Spleen (tissue), 13 donors: ENCODE measurements at regions of chr15 and their contacts with region 1.

Region 1: DNA sequence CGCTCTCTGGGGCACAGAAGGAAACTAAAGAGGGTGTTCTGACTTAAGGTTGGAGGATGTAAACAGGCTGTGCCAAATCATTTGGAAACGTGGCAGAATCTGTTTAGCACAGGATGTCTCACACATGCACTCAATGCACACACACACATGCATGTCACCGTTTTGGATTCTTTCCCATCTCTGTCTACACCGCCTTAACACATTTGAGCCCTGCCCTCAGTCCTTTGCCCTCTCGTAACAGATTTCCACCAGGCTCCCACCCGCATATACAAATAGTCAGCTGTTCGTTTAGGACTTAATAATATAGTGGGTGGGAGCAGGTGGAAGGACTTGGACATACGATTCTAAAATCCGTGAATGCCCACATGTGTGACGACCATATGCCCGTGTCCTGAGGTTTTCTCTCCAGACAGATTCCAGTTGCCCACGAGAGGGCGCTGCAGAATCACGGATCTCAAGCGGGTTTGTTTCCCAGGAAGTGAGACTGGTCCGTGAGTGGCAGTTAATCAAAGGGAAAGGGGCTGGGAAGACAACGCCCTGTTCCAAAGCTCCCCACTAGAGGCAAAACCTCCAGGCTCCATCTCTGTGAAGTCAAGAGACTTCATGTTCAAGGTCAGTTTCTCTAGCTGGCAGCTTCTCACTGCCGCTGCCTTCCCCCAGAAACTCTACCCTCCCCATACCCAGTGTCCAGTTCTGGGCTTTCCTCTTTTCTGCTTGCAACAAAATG is 44.5 kb downstream of the NOX5 start:
- DNase-seq: peak; percentile 90
- H3K4me3 ChIP-seq: no peak overlapping the region
- H3K27ac ChIP-seq: no peak overlapping the region
- H3K4me1 ChIP-seq: peaks cover 0 to 25% (median 7%) of the 10 kb centered on the region in 6 donors
- H3K27me3 ChIP-seq: peaks cover 0 to 12% (median 0%) of the 10 kb centered on the region in 7 donors
- CTCF ChIP-seq: peak; percentile 65 to 89 (median 83)
- POLR2A ChIP-seq: no peak

Region 2: DNA sequence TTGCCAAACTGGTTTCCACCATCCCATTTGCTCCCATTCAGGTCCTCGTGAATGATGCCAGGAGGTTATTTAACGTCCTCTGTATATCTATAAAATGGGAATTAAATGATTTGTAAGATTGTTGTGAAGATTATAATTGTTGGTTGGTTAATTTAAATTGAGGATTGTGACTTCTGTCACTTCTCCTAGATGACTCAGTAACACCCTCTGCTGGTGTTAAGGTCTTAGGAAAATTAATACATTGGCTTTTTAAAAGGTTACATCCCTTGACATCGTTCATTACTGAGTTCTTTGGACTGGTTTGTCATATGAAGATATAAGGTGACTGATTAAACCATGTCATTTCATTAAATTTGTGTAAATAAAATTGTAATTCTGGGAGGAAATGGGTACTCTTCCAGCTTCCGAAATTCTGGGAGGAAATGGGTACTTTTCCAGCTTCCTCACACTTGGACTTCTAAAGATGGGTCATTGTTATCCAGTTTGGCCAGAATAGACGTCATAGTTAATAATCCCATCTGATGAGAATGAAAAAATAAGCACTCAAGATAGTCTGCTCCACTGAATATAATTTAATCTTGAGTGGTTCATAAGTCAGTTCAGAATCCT is 206.5 kb after region 1 on chr15:
- intact Hi-C with region 1: loop called (anchors 5 kb)
- DNase-seq: no peak
- H3K4me3 ChIP-seq: no peak overlapping the region
- H3K27ac ChIP-seq: no peak overlapping the region
- H3K4me1 ChIP-seq: peaks cover 0 to 7% (median 0%) of the 10 kb centered on the region in 6 donors
- H3K27me3 ChIP-seq: no peaks in the 10 kb centered on the region
- CTCF ChIP-seq: peak in 8 of 11 experiments; percentile 10 to 51 (median 36)
- POLR2A ChIP-seq: no peak

Region 3: DNA sequence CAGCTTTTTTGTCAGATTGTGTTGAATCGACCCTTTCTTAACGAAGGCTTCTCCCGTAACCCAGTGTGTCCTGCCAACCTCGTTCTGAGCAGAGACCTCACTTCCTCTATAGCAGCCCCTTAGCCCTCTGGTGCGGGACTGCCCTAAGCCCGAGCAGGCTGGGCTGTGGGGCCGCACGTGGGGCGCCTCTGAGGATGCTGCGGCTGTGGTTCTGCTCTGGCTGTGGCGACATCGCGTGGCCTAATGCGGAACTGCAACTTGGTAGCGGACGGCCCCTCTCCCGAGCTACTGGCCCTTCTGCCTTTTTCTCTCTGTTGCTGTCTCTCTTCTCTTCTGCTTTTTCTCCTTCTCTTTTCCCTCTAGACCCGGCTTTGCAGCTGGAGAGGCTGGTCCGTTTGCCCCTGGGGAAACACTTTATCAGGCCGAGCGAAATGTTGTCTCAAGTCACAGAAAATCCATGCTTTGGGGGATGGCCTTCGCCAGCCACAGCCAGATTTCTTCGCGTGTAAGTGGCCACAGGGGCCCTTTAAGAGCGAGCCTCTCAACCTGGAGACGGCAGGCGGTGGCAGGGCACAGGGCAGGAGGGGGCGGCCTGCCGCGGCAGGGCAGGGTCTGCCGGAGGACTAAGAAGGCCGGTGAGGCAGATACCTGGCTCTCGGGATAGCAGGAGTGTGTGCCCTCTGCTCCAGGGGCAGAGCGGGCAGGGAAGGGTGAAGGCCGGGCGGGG is 335.7 kb after region 1 on chr15:
- intact Hi-C with region 1: loop called (anchors 2 kb)
- DNase-seq: peak; percentile 95
- H3K4me3 ChIP-seq: peak overlapping the region in 1 of 8 donors; percentile 25
- H3K27ac ChIP-seq: no peak overlapping the region
- H3K4me1 ChIP-seq: peaks cover 0 to 10% (median 8%) of the 10 kb centered on the region in 6 donors
- H3K27me3 ChIP-seq: peaks cover 0 to 15% (median 0%) of the 10 kb centered on the region in 7 donors
- CTCF ChIP-seq: peak; percentile 80 to 99 (median 95)
- POLR2A ChIP-seq: no peak